H1 (cell line): ENCODE measurements at regions of chr4 and their contacts with region 1.

Region 1: GRCh38 chr4:169010125-169011023 is at the start of gene CBR4:
- DNase-seq: peak; percentile 88 to 98
- H3K4me3 ChIP-seq: peak within 1 kb of the TSS; percentile 78 to 89 (median 88)
- H3K27ac ChIP-seq: peak within 1 kb of the TSS; percentile 88
- H3K4me1 ChIP-seq: peaks cover 0 to 3% (median under 1%) of the 10 kb centered on the region in 4 experiments; a peak in 3 of 7 replicates
- H3K27me3 ChIP-seq: no peaks in the 10 kb centered on the region
- CTCF ChIP-seq: peak; percentile 8 to 15 (median 13); a peak in 3 of 4 replicates
- EP300 ChIP-seq: no peak
- POLR2A ChIP-seq: peak; percentile 38 to 70
- RAD21 ChIP-seq: peak; percentile 4 to 6; a peak in 1 of 4 replicates
- total RNA-seq, gene CBR4: 29.5 and 30.6 TPM in 2 replicates

Region 2: GRCh38 chr4:168723020-168723419 is 287.4 kb before region 1 on chr4:
- CTCF ChIA-PET with region 1: no interaction called
- POLR2A ChIA-PET with region 1: no interaction called
- DNase-seq: no peak
- H3K4me3 ChIP-seq: no peak overlapping the region
- H3K27ac ChIP-seq: no peak overlapping the region
- H3K4me1 ChIP-seq: peaks cover 0 to 4% (median 0%) of the 10 kb centered on the region in 4 experiments; a peak in 1 of 7 replicates
- H3K27me3 ChIP-seq: no peaks in the 10 kb centered on the region
- CTCF ChIP-seq: no peak
- EP300 ChIP-seq: no peak
- POLR2A ChIP-seq: no peak
- RAD21 ChIP-seq: no peak

Region 3: DNA sequence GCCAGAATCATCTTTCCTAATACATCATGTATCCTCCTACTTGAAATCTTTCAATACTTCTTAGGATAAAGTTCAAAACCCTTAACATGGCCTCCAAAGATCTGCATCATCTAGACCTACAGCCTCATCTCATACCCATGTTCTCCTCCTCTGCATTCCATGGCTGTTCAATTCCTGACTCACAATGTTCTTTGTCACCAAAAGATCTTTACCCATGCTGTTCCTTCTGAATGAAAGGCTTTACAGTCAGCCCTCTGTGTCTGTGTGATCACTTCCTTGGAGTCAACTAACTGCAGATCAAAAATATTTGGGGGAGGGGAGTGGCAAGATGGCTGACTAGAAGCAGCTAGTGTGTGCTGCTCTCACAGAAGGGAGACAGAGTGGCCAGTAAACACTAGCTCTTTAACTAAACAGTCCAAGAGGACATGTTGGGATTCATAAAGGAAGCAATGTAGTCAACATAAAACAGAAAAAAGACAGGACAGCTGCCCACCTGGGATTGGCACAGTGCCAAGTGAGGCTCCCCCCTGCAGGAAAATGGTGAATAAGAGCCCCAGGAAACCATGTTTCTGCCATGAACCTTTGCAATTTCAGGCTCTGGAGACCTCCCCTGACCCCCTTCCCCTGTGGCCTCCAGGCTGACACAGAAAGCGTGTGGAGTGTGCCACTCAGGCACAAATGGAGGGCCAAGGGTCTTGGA is 32.2 kb before region 1 on chr4:
- CTCF ChIA-PET with region 1: no interaction called
- POLR2A ChIA-PET with region 1: interaction called, 12 read pairs
- DNase-seq: no peak
- H3K4me3 ChIP-seq: no peak overlapping the region
- H3K27ac ChIP-seq: no peak overlapping the region
- H3K4me1 ChIP-seq: no peaks in the 10 kb centered on the region
- H3K27me3 ChIP-seq: no peaks in the 10 kb centered on the region
- CTCF ChIP-seq: no peak
- EP300 ChIP-seq: no peak
- POLR2A ChIP-seq: no peak
- RAD21 ChIP-seq: no peak

Region 4: DNA sequence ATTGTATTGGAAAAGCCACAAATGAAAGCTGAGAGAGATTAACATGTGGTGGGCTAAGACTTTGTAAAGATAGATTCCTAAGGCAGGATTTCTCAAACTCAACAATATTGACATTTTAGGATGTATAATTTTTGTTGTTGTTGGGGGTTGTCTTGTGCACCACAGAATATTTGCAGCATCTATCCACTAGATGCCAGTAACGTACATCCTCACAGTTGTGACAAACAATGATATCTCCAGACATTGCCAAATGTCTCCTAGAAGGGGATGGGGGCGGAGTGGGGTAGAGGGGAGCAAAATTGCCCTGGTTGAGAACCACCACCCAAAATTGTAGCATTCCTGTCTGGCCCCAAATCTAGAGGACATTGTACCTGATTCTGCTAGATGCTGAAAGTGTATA is 14.4 kb after region 1 on chr4:
- CTCF ChIA-PET with region 1: interaction called, 12 read pairs
- POLR2A ChIA-PET with region 1: interaction called, 4 read pairs
- DNase-seq: no peak
- H3K4me3 ChIP-seq: no peak overlapping the region
- H3K27ac ChIP-seq: no peak overlapping the region
- H3K4me1 ChIP-seq: no peaks in the 10 kb centered on the region
- H3K27me3 ChIP-seq: no peaks in the 10 kb centered on the region
- CTCF ChIP-seq: peak in 2 of 3 experiments; percentile 34 to 44; a peak in 2 of 4 replicates
- EP300 ChIP-seq: no peak
- POLR2A ChIP-seq: no peak
- RAD21 ChIP-seq: peak; percentile 69 to 74

Region 5: DNA sequence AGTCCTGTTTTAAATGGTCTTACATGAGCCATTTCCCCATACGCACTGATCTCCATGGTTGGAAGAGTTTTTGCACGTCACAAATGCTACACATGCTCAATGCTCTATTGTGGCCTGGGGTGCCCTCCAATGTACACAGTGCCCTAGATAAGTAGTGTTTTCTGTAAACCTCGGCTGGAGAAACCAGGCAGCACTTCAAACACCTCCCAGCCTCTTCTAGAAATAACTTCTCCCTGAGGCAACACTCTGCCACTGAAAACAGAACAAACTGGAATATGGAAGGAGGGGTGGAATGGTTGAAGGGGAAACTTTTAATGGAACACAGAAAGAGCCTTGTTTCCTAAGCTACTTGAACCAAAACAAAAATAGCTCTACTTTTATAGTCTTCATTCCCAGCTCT is 123.6 kb after region 1 on chr4:
- CTCF ChIA-PET with region 1: no interaction called
- POLR2A ChIA-PET with region 1: no interaction called
- DNase-seq: no peak
- H3K4me3 ChIP-seq: no peak overlapping the region
- H3K27ac ChIP-seq: no peak overlapping the region
- H3K4me1 ChIP-seq: no peaks in the 10 kb centered on the region
- H3K27me3 ChIP-seq: no peaks in the 10 kb centered on the region
- CTCF ChIP-seq: no peak
- EP300 ChIP-seq: no peak
- POLR2A ChIP-seq: no peak
- RAD21 ChIP-seq: no peak